Cardiac septum (tissue), 1 donor: ENCODE measurements at regions of chr1 and their contacts with region 1.

Region 1: GRCh38 chr1:247491328-247491727 is 33.4 kb upstream of the OR2B11 start:
- DNase-seq: no peak

Region 2: GRCh38 chr1:247390116-247390791 is 101.1 kb before region 1 on chr1:
- intact Hi-C with region 1: loop called (anchors 2 kb)
- DNase-seq: peak; percentile 89